MCF 10A (cell line): ENCODE measurements at regions of chr4 and their contacts with region 1.

Region 1: GRCh38 chr4:165131247-165131832 is 18.7 kb upstream of the TMEM192 start:
- DNase-seq: peak; percentile 78
- H3K4me3 Mint-ChIP-seq: no peak overlapping the region
- H3K27ac Mint-ChIP-seq: no peak overlapping the region
- H3K4me1 Mint-ChIP-seq: peaks cover 6% of the 10 kb centered on the region
- H3K27me3 Mint-ChIP-seq: no peaks in the 10 kb centered on the region
- CTCF ChIP-seq: peak; percentile 86

Region 2: DNA sequence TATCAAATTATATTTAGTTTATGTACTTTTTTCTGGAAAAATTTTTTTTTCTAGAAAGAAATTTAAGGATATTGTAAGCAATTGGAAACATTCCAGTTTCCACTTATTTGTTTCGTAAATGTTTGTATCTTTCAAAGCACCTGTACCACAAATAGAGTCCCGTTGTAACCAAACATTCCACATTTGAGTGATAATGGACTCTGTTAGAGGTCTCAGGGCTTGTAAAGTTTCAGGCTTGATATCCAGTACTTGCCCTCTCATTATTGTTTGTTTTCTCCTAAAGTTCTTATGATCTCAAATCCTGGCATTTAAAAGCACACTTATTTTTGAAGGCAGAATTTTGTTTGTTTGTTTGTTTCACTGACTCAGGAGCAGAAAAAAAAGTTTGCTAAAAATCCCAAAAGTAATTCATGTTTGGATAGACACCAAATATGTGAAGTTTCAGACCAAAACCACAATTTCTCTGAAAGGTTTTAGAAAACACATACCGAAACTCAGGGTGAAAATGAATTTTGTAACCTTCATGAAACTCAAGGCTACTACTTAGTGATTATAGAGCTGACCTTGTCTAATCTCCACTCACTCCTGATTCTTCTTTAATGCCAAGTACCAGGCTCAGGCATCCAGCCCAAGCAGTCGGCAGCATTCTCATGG is 13.0 kb before region 1 on chr4:
- CTCF ChIA-PET with region 1: interaction called, 23 read pairs
- POLR2A ChIA-PET with region 1: interaction called, 5 read pairs
- intact Hi-C with region 1: no loop called
- DNase-seq: no peak
- H3K4me3 Mint-ChIP-seq: no peak overlapping the region
- H3K27ac Mint-ChIP-seq: no peak overlapping the region
- H3K4me1 Mint-ChIP-seq: peaks cover 6% of the 10 kb centered on the region
- H3K27me3 Mint-ChIP-seq: no peaks in the 10 kb centered on the region
- CTCF ChIP-seq: no peak

Region 3: GRCh38 chr4:165288639-165289422 is 157.5 kb after region 1 on chr4:
- CTCF ChIA-PET with region 1: interaction called, 13 read pairs
- POLR2A ChIA-PET with region 1: interaction called, 3 read pairs
- intact Hi-C with region 1: loop called (anchors 1 kb)
- DNase-seq: peak; percentile 69
- H3K4me3 Mint-ChIP-seq: no peak overlapping the region
- H3K27ac Mint-ChIP-seq: peak overlapping the region; percentile 6
- H3K4me1 Mint-ChIP-seq: peaks cover 20% of the 10 kb centered on the region
- H3K27me3 Mint-ChIP-seq: no peaks in the 10 kb centered on the region
- CTCF ChIP-seq: no peak

Region 4: GRCh38 chr4:165355900-165356300 is 224.6 kb after region 1 on chr4:
- CTCF ChIA-PET with region 1: interaction called, 14 read pairs
- POLR2A ChIA-PET with region 1: no interaction called
- intact Hi-C with region 1: no loop called
- DNase-seq: peak; percentile 66
- H3K4me3 Mint-ChIP-seq: no peak overlapping the region
- H3K27ac Mint-ChIP-seq: no peak overlapping the region
- H3K4me1 Mint-ChIP-seq: peaks cover 32% of the 10 kb centered on the region
- H3K27me3 Mint-ChIP-seq: no peaks in the 10 kb centered on the region
- CTCF ChIP-seq: peak; percentile 50

Region 5: GRCh38 chr4:165472943-165473676 is 341.8 kb after region 1 on chr4:
- CTCF ChIA-PET with region 1: interaction called, 57 read pairs
- POLR2A ChIA-PET with region 1: interaction called, 4 read pairs
- intact Hi-C with region 1: no loop called
- DNase-seq: peak; percentile 16
- H3K4me3 Mint-ChIP-seq: no peak overlapping the region
- H3K27ac Mint-ChIP-seq: no peak overlapping the region
- H3K4me1 Mint-ChIP-seq: no peaks in the 10 kb centered on the region
- H3K27me3 Mint-ChIP-seq: no peaks in the 10 kb centered on the region
- CTCF ChIP-seq: no peak